ENCODE measurements at regions of chrX and their contacts with region 1.

Region 1: GRCh38 chrX:69387567-69388487 is 116.3 kb upstream of the NALF2 start:
- DNase-seq: peak; percentile 57 to 80
- H3K4me3 ChIP-seq: no peak overlapping the region
- H3K27ac ChIP-seq: no peak overlapping the region
- H3K4me1 ChIP-seq: peaks cover 0 to 6% (median 2%) of the 10 kb centered on the region in 4 experiments; a peak in 2 of 7 replicates
- H3K27me3 ChIP-seq: peaks cover 0 to 2% (median 1%) of the 10 kb centered on the region in 4 experiments; a peak in 1 of 7 replicates
- CTCF ChIP-seq: peak; percentile 69 to 84 (median 80)
- EP300 ChIP-seq: no peak
- POLR2A ChIP-seq: no peak
- RAD21 ChIP-seq: peak; percentile 88 to 90

Region 2: DNA sequence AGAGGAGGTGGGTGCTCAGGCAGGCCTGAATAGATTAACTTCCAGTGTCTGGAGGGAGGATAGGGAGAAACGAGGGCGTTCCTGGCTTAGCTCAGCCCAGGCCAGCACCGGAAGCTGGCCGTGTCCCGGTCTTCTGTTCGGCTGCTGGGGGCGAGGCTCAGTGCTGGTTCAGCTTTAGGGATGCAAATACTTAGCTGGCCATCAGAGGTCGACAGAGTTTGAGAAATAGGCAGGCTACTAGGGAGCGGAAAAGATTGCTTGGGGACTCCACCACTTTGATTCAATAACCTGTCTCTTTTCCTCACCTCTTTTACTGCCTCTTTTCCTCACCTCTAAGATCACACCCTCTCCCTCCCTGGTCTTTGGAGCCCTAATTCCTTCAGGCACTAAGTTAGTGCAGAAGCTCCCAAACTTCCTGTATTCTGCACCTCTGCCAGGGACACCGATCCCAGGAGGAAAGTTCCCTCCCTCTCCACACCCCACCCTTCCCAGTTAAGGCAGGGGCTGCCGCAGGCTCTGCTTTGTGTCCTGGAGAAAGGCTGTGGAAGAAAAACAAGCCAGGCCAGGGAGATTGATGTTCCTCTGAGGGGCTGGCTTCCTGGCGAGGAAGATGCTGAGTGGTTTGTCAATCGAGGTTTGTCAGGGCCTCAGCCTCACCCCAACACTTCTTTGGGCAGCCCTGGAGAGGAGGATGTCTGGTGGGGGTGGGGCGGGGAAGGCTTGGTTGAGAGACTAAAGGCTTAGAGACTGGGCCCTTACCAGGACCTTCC is 565.0 kb before region 1 on chrX:
- CTCF ChIA-PET with region 1: interaction called, 13 read pairs
- POLR2A ChIA-PET with region 1: no interaction called
- DNase-seq: no peak
- H3K4me3 ChIP-seq: no peak overlapping the region
- H3K27ac ChIP-seq: no peak overlapping the region
- H3K4me1 ChIP-seq: peaks cover 0 to 3% (median 0%) of the 10 kb centered on the region in 4 experiments; a peak in 3 of 7 replicates
- H3K27me3 ChIP-seq: peaks cover 0 to 27% (median 20%) of the 10 kb centered on the region in 4 experiments; a peak in 6 of 7 replicates
- CTCF ChIP-seq: peak in 2 of 3 experiments; percentile 53 to 76; a peak in 3 of 4 replicates
- EP300 ChIP-seq: no peak
- POLR2A ChIP-seq: no peak
- RAD21 ChIP-seq: peak; percentile 81 to 87

Region 3: DNA sequence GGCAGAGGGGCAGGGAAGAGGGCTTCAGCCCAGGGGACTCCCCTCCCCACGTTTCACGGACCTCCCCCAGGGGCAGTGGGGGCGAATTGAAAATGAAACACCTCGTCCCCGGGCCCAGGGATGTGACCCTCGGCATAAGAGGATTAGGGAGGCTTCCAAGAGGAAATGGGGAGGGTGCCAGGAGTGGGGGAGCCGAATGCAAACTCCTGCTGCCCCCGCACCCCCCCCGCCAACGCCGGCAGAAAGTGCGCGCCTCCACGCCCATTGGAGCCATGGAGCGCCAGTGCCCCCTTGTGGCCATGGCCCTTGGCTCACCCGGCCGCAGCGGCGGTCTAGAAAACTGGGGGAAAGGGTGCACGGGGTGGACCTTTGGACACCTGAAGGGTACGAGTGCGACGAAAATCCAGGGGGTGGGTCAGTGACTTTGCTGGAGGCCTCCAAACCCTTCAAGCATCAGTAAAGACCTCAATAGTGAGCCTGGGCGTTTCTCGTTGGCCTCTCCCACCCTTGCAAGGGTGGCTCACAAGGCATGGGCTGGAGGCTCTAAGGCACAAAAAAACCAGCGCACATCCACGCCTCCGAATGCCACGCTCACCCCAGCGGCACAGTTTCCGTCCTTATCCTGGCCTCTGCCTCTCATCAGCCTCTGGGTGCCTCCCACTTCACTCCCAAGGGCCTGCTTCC is 101.8 kb before region 1 on chrX:
- CTCF ChIA-PET with region 1: interaction called, 26 read pairs
- POLR2A ChIA-PET with region 1: interaction called, 3 read pairs
- DNase-seq: peak in 1 of 2 experiments; percentile 81
- H3K4me3 ChIP-seq: peak overlapping the region in 3 of 4 experiments; percentile 29 to 60 (median 33); a peak in 4 of 8 replicates
- H3K27ac ChIP-seq: no peak overlapping the region
- H3K4me1 ChIP-seq: peaks cover 0 to 13% (median 5%) of the 10 kb centered on the region in 4 experiments; a peak in 6 of 7 replicates
- H3K27me3 ChIP-seq: peaks cover 3 to 33% (median 27%) of the 10 kb centered on the region in 4 experiments
- CTCF ChIP-seq: peak in 2 of 3 experiments; percentile 66 to 72; a peak in 3 of 4 replicates
- EP300 ChIP-seq: no peak
- POLR2A ChIP-seq: no peak
- RAD21 ChIP-seq: peak; percentile 79 to 83

Region 4: GRCh38 chrX:69291116-69291515 is 96.7 kb before region 1 on chrX:
- CTCF ChIA-PET with region 1: interaction called, 26 read pairs
- POLR2A ChIA-PET with region 1: interaction called, 3 read pairs
- DNase-seq: no peak
- H3K4me3 ChIP-seq: no peak overlapping the region
- H3K27ac ChIP-seq: no peak overlapping the region
- H3K4me1 ChIP-seq: peaks cover 0 to 9% (median 5%) of the 10 kb centered on the region in 4 experiments; a peak in 6 of 7 replicates
- H3K27me3 ChIP-seq: peaks cover 2 to 12% (median 6%) of the 10 kb centered on the region in 4 experiments; a peak in 6 of 7 replicates
- CTCF ChIP-seq: no peak
- EP300 ChIP-seq: no peak
- POLR2A ChIP-seq: no peak
- RAD21 ChIP-seq: no peak

Region 5: GRCh38 chrX:69305333-69306062 is 82.3 kb before region 1 on chrX:
- CTCF ChIA-PET with region 1: interaction called, 22 read pairs
- POLR2A ChIA-PET with region 1: no interaction called
- DNase-seq: peak; percentile 60 to 67
- H3K4me3 ChIP-seq: peak overlapping the region in 2 of 4 experiments; percentile 12 to 49; a peak in 3 of 8 replicates
- H3K27ac ChIP-seq: no peak overlapping the region
- H3K4me1 ChIP-seq: peaks cover 1 to 19% (median 6%) of the 10 kb centered on the region in 4 experiments; a peak in 5 of 7 replicates
- H3K27me3 ChIP-seq: no peaks in the 10 kb centered on the region
- CTCF ChIP-seq: no peak
- EP300 ChIP-seq: no peak
- POLR2A ChIP-seq: no peak
- RAD21 ChIP-seq: no peak

Region 6: GRCh38 chrX:69361311-69361845 is 26.4 kb before region 1 on chrX:
- CTCF ChIA-PET with region 1: interaction called, 10 read pairs
- POLR2A ChIA-PET with region 1: no interaction called
- DNase-seq: no peak
- H3K4me3 ChIP-seq: no peak overlapping the region
- H3K27ac ChIP-seq: no peak overlapping the region
- H3K4me1 ChIP-seq: no peaks in the 10 kb centered on the region; a peak in 1 of 7 replicates
- H3K27me3 ChIP-seq: no peaks in the 10 kb centered on the region; a peak in 2 of 7 replicates
- CTCF ChIP-seq: no peak
- EP300 ChIP-seq: no peak
- POLR2A ChIP-seq: no peak
- RAD21 ChIP-seq: no peak

Region 7: DNA sequence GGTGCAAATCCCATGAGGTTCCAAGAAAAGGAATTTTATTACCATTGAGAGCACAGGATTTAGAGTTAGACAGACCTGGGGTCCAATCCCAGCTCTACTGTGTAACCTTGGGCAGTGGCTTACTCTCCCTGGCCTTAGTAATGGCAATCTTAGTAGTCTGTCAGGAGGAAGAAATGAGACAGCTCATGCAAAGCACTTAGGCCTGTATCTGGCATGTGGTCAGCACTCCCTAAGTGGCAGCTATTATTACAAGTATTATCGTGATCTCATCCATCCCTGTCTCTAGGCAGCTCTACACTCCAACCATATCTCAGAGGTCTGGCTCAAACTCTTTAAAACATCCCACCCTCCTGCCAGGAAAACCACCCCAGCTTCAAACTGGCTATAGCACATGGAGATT is 13.3 kb before region 1 on chrX:
- CTCF ChIA-PET with region 1: interaction called, 16 read pairs
- POLR2A ChIA-PET with region 1: no interaction called
- DNase-seq: no peak
- H3K4me3 ChIP-seq: no peak overlapping the region
- H3K27ac ChIP-seq: no peak overlapping the region
- H3K4me1 ChIP-seq: no peaks in the 10 kb centered on the region
- H3K27me3 ChIP-seq: no peaks in the 10 kb centered on the region
- CTCF ChIP-seq: no peak
- EP300 ChIP-seq: no peak
- POLR2A ChIP-seq: no peak
- RAD21 ChIP-seq: no peak

Measured in H1 (cell line).